ENCODE measurements at regions of chr3 and their contacts with region 1.

Region 1: GRCh38 chr3:48088749-48089466 is 72.7 kb upstream of the MAP4 start:
- DNase-seq: peak; percentile 96
- H3K4me3 ChIP-seq: peak overlapping the region; percentile 83
- H3K27ac ChIP-seq: peak overlapping the region; percentile 81
- H3K4me1 ChIP-seq: peaks cover 19% of the 10 kb centered on the region
- CTCF ChIP-seq: no peak

Region 2: GRCh38 chr3:47741925-47742324 is 347.0 kb before region 1 on chr3:
- CTCF ChIA-PET with region 1: no interaction called
- POLR2A ChIA-PET with region 1: no interaction called
- intact Hi-C with region 1: no loop called
- DNase-seq: no peak
- H3K4me3 ChIP-seq: no peak overlapping the region
- H3K27ac ChIP-seq: no peak overlapping the region
- H3K4me1 ChIP-seq: no peaks in the 10 kb centered on the region
- CTCF ChIP-seq: no peak

Region 3: DNA sequence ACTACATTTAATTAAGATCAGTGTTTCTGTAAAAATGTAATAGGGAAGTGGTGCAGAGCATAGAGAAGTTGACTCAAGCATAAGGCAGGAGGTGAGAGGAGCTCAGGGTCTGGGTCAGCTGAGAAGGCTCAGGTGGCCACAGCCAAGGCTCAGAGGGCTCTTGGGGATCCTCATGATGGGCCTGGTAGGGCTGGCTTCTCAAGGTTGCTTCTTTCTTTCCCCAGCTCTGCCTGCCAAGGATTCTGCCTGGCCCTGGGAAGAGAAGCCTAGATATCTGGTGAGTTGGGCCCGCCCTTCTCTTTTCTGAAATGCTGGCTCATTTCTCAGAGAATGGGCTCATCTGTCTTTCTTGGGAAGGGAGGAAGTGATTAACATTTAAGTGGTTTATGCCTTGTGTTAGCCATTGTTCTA is 158.5 kb after region 1 on chr3:
- CTCF ChIA-PET with region 1: no interaction called
- POLR2A ChIA-PET with region 1: interaction called, 10 read pairs
- intact Hi-C with region 1: no loop called
- DNase-seq: no peak
- H3K4me3 ChIP-seq: no peak overlapping the region
- H3K27ac ChIP-seq: no peak overlapping the region
- H3K4me1 ChIP-seq: peaks cover 16% of the 10 kb centered on the region
- CTCF ChIP-seq: no peak

Measured in OCI-LY7 (cell line).